ENCODE measurements at regions of chr20 and their contacts with region 1.

Region 1: GRCh38 chr20:49549811-49550551 is 18.0 kb downstream of the PTGIS start:
- DNase-seq: no peak
- ATAC-seq: no peak
- H3K4me3 ChIP-seq: no peak overlapping the region
- H3K27ac ChIP-seq: no peak overlapping the region
- H3K4me1 ChIP-seq: peaks cover 0 to 32% (median 9%) of the 10 kb centered on the region in 9 donors
- H3K27me3 ChIP-seq: no peaks in the 10 kb centered on the region
- CTCF ChIP-seq: no peak

Region 2: DNA sequence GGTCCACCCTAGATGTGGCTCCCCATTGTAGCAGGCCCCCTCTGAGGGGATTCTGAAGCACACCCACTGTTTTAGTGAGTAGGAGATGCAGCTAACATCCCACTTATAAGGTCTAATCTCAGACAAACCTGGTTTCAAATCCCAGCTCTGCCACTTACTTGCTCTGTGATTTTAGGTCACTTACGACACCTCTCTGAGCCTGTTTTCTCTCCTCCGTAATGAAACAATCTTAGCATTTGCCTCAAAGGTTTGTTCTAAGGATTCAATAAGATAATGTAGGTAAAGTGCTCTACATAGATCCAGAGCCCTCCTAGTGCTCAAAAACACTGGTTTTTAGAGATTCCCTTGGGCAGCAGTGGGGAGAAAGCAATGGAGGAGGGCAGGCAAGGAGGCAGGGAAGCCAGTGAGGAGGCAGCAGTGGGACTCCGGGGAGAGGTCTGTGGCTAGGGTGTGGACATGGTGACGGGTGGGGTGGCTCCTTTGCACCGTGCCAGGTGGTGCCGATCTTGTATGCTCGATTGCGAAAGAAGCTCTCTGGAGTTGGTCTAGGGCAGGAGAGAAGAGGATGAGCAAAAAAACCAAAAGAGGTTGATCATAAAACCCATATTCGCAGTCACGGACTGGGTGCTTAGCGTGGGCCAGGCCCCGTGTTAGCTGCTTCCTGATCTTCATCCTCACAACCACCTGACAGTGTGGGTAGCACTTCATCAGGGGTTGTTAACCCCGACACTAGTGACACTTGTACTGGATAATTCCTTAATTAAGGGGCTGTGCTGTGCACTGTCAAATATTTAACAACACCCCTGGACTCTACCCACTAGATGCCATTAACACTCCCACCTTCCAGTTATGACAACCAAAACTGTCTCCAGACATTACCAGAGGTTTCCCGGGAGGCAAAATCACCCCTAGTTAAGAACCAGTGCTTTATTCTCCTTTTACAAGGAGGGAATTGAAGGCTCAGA is 34.7 kb after region 1 on chr20:
- intact Hi-C with region 1: loop called in 1 of 10 experiments (anchors 5 kb)
- DNase-seq: no peak
- ATAC-seq: peak in 1 of 8 donors; percentile 6
- H3K4me3 ChIP-seq: no peak overlapping the region
- H3K27ac ChIP-seq: peak overlapping the region; percentile 43 to 88 (median 68)
- H3K4me1 ChIP-seq: peaks cover 4 to 45% (median 17%) of the 10 kb centered on the region in 9 donors
- H3K27me3 ChIP-seq: no peaks in the 10 kb centered on the region
- CTCF ChIP-seq: no peak

Region 3: GRCh38 chr20:49594143-49594930 is 44.4 kb after region 1 on chr20:
- intact Hi-C with region 1: loop called in 3 of 10 experiments (anchors 5 kb)
- DNase-seq: peak; percentile 48 to 67
- ATAC-seq: peak; percentile 58 to 84 (median 73)
- H3K4me3 ChIP-seq: peak overlapping the region in 1 of 10 donors; percentile 22
- H3K27ac ChIP-seq: peak overlapping the region; percentile 16 to 81 (median 71)
- H3K4me1 ChIP-seq: peaks cover 5 to 61% (median 30%) of the 10 kb centered on the region in 9 donors
- H3K27me3 ChIP-seq: no peaks in the 10 kb centered on the region
- CTCF ChIP-seq: no peak